Ascending aorta (tissue), 2 donors: ENCODE measurements at regions of chr11 and their contacts with region 1.

Region 1: GRCh38 chr11:111299101-111300026 is 1.0 kb downstream of the POU2AF3 start:
- DNase-seq: peak in 1 of 2 donors; percentile 78
- H3K4me3 ChIP-seq: peak overlapping the region; percentile 49 to 81
- H3K27ac ChIP-seq: peak overlapping the region; percentile 58 to 87
- H3K4me1 ChIP-seq: peaks cover 0 to 5% of the 10 kb centered on the region in 2 donors
- H3K27me3 ChIP-seq: no peaks in the 10 kb centered on the region
- CTCF ChIP-seq: peak; percentile 71 to 76 (median 75)

Region 2: DNA sequence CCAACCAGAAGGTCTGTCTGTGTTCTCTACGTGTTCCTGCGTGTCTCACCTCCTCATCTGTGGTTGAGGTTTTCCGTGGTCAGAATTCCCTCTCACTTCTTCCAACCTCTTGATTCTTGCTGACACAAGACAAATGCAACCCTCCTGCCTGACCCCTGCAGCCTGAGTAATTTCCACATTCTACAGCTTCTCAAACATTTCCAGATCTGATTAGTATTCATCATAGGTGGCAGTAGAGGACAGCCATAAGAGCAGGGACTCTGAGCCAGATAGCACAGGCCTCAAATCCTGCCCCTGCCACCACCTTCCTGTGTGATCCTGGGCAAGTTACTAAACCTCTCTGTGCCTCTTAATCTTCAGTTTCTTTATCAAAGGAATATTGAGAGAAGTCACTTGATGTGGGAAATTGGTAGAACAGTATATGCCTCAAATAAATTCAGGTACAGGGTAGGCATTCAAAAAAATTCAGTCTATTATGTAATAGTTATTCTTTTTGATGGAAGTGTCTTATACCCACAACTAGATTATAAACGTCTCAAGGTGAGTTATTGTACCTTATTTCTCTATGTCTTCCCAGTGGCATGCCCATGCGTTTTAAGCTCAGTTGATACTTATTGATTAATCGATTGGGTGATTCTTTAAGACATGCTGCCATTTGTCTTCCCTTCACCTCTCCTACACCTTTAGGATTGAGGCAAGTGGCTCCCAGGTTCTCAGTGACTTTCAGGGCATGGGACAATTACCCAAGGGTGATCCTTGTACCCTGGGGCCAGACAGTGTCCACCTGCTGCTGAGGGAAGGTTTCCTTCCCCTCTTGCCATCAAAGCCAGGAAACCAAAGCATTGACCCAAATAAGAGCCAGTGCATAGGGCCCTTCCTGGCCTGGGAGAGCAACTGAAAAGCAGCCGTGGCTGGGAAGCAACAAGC is 60.1 kb after region 1 on chr11:
- intact Hi-C with region 1: loop called (anchors 10 kb)
- DNase-seq: no peak
- H3K4me3 ChIP-seq: no peak overlapping the region
- H3K27ac ChIP-seq: no peak overlapping the region
- H3K4me1 ChIP-seq: no peaks in the 10 kb centered on the region
- H3K27me3 ChIP-seq: no peaks in the 10 kb centered on the region
- CTCF ChIP-seq: no peak

Region 3: DNA sequence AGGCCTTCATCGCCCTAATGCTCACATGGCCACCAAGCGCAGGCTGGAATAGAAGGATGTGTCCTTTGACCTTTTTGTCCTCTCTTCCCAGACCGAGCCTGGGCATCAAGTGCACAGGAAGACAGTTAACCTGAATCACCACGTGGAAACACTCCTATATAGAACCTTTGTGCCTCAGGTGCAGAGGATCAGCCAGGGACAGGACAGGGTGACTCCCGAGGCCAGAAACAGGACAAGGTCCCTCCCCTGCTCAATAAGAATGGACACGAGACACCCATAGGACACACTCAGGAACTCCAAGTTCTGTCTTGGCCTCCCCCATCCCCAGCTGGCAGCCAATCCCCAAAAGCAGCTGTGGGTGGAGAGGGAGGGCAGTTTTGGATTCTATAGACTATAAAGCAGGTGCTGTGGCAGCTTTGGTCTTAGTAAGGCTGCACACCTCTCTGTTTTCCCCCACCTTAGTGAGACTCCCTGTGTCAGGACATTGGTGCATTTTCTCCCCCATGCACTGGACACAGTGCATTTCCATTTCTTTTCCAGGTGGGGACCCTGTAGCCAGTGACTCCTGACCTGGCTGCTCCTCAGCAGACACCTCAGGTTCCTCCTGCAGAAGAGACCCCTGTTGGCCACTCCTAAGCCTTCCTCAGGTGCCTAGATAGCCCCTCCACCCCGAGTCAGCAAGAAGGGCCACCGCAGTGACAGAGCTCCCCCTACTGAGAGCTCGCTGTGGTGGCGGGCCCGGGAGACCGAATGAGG is 123.3 kb after region 1 on chr11:
- intact Hi-C with region 1: loop called (anchors 2 kb)
- DNase-seq: peak in 1 of 2 donors; percentile 72
- H3K4me3 ChIP-seq: no peak overlapping the region
- H3K27ac ChIP-seq: no peak overlapping the region
- H3K4me1 ChIP-seq: peaks cover 10 to 17% of the 10 kb centered on the region in 2 donors
- H3K27me3 ChIP-seq: no peaks in the 10 kb centered on the region
- CTCF ChIP-seq: peak; percentile 70 to 91 (median 72)

Region 4: DNA sequence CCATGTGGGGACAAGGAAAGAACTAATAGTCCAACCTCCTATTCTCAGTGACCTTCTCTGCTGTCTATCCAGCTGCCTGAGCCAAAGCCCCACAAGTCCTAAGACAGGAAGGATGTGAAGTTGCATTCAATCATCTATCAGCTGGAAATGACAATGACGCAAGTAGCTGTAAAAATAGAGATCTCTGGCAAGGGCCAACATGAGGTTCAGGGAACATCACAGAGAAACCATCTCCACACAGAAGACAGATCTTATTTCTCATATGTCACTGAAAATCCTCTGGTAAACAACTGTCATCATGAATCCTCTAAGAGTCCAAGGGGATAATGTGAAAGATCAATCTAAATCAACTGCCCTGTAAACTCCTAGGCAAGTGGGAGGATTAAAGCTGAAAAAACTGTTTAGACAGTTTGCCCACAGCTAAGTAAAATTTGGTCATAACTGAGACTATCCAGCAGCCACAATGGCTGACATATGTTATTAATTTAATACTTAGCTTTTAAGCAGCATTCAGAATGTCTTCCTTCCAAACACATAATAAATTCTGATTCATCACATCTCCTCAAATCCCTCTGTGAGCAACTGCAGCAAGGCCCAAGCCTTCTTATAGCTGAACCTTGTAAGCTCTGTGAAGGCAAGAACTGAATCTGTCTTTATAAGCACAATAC is 519.9 kb after region 1 on chr11:
- intact Hi-C with region 1: no loop called
- DNase-seq: no peak
- H3K4me3 ChIP-seq: no peak overlapping the region
- H3K27ac ChIP-seq: peak overlapping the region; percentile 27 to 40
- H3K4me1 ChIP-seq: no peaks in the 10 kb centered on the region
- H3K27me3 ChIP-seq: no peaks in the 10 kb centered on the region
- CTCF ChIP-seq: no peak